Activated CD8-positive, alpha-beta T cell treated with anti-CD3 and anti-CD28 coated beads for 36 hours (primary cell): ENCODE measurements at regions of chr22 and their contacts with region 1.

Region 1: DNA sequence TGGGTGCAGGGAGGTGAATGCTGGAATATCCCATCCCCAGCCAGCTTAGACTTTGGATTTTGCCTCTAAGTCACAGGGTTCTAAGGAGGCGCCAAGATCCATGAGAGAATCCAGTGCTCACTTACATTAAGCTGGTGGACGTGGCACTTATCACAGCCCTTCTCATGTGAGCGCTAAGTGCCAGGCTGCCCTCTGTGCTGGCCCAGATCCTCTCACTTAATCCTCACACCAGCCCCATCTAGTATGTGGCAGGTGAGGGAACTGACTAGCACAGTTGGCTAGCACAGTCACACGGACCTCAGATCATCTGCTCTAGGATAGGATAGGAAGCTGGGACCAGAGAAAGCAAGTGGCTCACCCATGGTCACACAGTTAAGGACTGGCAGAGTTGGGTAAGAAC is 3.6 kb downstream of the HMOX1 start:
- DNase-seq: no peak
- ATAC-seq: no peak
- H3K4me3 Mint-ChIP-seq: no peak overlapping the region
- H3K27ac Mint-ChIP-seq: no peak overlapping the region
- H3K4me1 Mint-ChIP-seq: peaks cover 5% of the 10 kb centered on the region
- H3K27me3 Mint-ChIP-seq: peaks cover 36% of the 10 kb centered on the region
- CTCF ChIP-seq: no peak

Region 2: GRCh38 chr22:35363571-35364086 is 20.9 kb before region 1 on chr22:
- CTCF ChIA-PET with region 1: no interaction called
- POLR2A ChIA-PET with region 1: no interaction called
- intact Hi-C with region 1: loop called (anchors 2 kb)
- DNase-seq: no peak
- ATAC-seq: no peak
- H3K4me3 Mint-ChIP-seq: no peak overlapping the region
- H3K27ac Mint-ChIP-seq: no peak overlapping the region
- H3K4me1 Mint-ChIP-seq: no peaks in the 10 kb centered on the region
- H3K27me3 Mint-ChIP-seq: peaks cover 15% of the 10 kb centered on the region
- CTCF ChIP-seq: no peak